ENCODE measurements at regions of chr3 and their contacts with region 1.

Region 1: GRCh38 chr3:179562591-179563270 is at the start of gene ACTL6A:
- DNase-seq: peak; percentile 99
- H3K4me3 Mint-ChIP-seq: peak within 1 kb of the TSS; percentile 97
- H3K27ac Mint-ChIP-seq: peak within 1 kb of the TSS; percentile 96
- H3K4me1 Mint-ChIP-seq: peaks cover 28% of the 10 kb centered on the region
- H3K27me3 Mint-ChIP-seq: peaks cover 2% of the 10 kb centered on the region
- total RNA-seq, gene ACTL6A: 89.2 to 90.0 TPM

Region 2: GRCh38 chr3:179015551-179016020 is 547.1 kb before region 1 on chr3:
- CTCF ChIA-PET with region 1: no interaction called
- intact Hi-C with region 1: loop called (anchors 1 kb)
- DNase-seq: peak; percentile 81
- H3K4me3 Mint-ChIP-seq: no peak overlapping the region
- H3K27ac Mint-ChIP-seq: no peak overlapping the region
- H3K4me1 Mint-ChIP-seq: peaks cover 35% of the 10 kb centered on the region
- H3K27me3 Mint-ChIP-seq: no peaks in the 10 kb centered on the region

Region 3: GRCh38 chr3:179105881-179106280 is 456.9 kb before region 1 on chr3:
- CTCF ChIA-PET with region 1: no interaction called
- intact Hi-C with region 1: loop called (anchors 2 kb)
- DNase-seq: no peak
- H3K4me3 Mint-ChIP-seq: no peak overlapping the region
- H3K27ac Mint-ChIP-seq: no peak overlapping the region
- H3K4me1 Mint-ChIP-seq: peaks cover 1% of the 10 kb centered on the region
- H3K27me3 Mint-ChIP-seq: no peaks in the 10 kb centered on the region

Region 4: GRCh38 chr3:179391906-179392305 is 170.8 kb before region 1 on chr3:
- CTCF ChIA-PET with region 1: no interaction called
- intact Hi-C with region 1: no loop called
- DNase-seq: no peak
- H3K4me3 Mint-ChIP-seq: no peak overlapping the region
- H3K27ac Mint-ChIP-seq: no peak overlapping the region
- H3K4me1 Mint-ChIP-seq: no peaks in the 10 kb centered on the region
- H3K27me3 Mint-ChIP-seq: no peaks in the 10 kb centered on the region

Region 5: DNA sequence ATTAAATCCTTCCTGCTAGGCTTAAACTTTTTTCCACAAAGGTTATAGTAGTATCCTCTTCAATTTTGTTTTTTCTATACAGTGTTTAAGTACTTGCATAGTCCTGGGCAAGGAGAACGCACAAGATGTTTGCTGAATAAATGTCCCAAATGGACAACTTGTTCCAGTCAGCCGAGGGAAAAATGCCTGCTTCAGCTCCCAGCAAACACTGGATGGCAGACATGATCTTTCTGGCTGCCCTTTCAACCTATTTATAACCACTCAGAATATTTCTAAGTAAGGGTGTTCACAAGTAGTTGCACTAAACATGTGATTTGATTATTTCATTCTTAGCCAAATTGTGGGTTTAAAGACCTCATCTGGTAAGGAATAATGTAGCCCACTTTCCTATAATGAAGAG is 141.2 kb before region 1 on chr3:
- CTCF ChIA-PET with region 1: interaction called, 5 read pairs
- intact Hi-C with region 1: loop called (anchors 1 kb)
- DNase-seq: no peak
- H3K4me3 Mint-ChIP-seq: no peak overlapping the region
- H3K27ac Mint-ChIP-seq: no peak overlapping the region
- H3K4me1 Mint-ChIP-seq: no peaks in the 10 kb centered on the region
- H3K27me3 Mint-ChIP-seq: no peaks in the 10 kb centered on the region

Region 6: DNA sequence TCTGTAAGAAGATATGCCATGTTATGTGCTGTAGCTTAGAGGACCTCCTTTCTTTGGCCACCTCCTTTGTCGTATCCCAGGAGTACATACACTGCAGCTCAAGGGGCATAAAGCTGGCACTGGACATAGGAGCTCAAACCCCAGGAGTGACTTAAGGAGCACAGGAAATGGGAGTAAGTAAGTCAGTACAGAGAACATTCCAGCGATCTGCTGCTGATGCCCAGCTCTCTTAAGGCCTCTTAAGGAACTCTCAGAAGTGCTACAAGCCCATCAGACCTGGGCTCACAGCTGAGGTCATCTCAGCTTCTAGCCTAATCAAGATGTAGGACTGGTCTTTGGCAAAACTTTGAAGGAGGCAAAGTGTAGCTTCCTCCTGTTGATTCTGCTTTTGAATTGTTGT is 21.6 kb before region 1 on chr3:
- CTCF ChIA-PET with region 1: no interaction called
- intact Hi-C with region 1: no loop called
- DNase-seq: no peak
- H3K4me3 Mint-ChIP-seq: no peak overlapping the region
- H3K27ac Mint-ChIP-seq: no peak overlapping the region
- H3K4me1 Mint-ChIP-seq: no peaks in the 10 kb centered on the region
- H3K27me3 Mint-ChIP-seq: no peaks in the 10 kb centered on the region

Region 7: DNA sequence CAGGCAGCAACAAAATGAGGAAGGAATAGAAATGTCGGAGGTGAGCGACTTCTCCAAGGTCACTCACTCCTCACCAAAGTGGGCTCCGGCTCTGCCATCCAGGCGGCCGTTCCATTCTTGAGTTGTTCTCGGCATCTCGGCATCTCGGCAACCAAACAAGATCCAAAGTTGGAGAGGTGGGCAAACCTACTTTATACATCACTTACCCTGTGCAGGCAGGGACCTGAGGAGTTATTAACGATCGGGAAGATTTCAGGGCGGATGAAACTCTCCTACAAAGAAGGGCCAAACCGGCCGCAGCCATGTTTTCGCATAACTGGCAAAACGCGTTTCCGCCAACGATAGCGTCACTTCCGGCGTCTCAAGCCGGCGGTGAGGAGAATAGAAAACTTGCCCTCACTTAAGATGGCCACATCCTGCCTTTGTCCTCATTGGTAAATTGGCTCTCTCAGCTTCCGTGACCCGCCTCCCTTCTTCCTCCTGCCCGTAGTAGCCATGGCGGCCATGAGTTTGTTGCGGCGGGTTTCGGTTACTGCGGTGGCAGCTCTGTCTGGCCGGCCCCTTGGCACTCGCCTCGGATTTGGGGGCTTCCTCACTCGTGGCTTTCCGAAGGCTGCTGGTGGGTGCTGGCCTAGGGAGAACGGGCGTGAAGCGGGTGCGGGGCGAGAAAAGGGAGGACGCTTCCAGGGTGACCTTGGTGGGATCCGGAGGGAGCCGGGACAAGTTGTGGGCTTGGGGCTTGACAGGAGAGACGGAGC is 41.8 kb after region 1 on chr3 and contains the starts of genes MRPL47 and NDUFB5:
- CTCF ChIA-PET with region 1: interaction called, 3 read pairs
- intact Hi-C with region 1: loop called (anchors 1 kb)
- DNase-seq: peak; percentile 96
- H3K4me3 Mint-ChIP-seq: peak within 1 kb of the TSS; percentile 100
- H3K27ac Mint-ChIP-seq: peak within 1 kb of the TSS; percentile 99
- H3K4me1 Mint-ChIP-seq: peaks cover 48% of the 10 kb centered on the region
- H3K27me3 Mint-ChIP-seq: no peaks in the 10 kb centered on the region
- total RNA-seq, gene MRPL47: 48.8 to 50.4 TPM
- total RNA-seq, gene NDUFB5: 148 to 151 TPM

Region 8: DNA sequence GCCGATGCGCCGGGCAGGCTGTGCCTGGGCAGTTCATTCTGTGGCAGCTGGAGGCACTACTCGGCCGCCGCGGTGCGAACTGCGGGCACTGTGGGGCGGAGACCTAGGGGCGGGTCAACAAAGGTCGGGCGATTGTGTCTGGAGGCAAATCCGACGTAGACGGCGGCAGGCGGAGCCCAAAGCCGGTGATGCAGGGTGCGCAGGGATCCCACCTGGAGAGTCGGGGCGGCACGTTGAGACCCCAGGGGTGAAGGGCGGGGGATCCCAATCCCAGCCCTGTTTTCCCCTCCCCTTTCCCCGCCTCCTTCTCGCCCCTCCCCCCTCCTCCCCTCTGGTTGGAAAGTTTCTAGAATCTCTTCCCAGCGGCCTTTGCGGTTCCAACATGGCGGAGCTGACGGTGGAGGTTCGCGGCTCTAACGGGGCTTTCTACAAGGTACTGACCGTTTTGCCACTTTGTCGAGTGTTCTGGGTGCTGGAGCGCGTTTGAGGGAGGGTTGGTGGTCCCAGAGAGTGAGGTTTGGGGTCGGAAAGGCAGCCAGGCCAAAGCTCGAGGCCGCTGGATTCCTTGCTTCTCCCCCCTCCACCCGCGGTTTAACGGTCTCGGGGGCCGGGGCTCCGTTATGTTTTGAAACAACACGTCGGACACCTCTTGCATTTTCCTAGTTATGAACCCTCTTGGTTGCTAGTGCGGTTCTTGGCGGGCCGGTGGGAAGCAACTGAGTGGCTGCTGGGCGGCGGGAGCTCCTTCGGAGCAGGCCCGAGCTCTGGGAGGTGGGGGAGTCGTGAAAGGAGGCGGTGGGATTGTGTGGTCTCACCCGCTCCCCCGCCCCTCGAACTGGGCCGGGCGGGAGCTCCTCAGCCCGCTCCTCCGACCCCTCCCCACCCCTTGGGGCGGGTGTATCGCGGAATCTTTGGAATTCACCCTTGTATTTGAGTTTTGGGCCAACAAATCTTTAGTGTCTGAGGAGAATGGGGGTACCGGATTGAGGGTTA is 1349.9 kb after region 1 on chr3 and contains the start of gene FXR1:
- CTCF ChIA-PET with region 1: no interaction called
- intact Hi-C with region 1: loop called (anchors 1 kb)
- DNase-seq: peak; percentile 96
- H3K4me3 Mint-ChIP-seq: peak within 1 kb of the TSS; percentile 93
- H3K27ac Mint-ChIP-seq: peak within 1 kb of the TSS; percentile 98
- H3K4me1 Mint-ChIP-seq: peaks cover 57% of the 10 kb centered on the region
- H3K27me3 Mint-ChIP-seq: no peaks in the 10 kb centered on the region
- total RNA-seq, gene FXR1: 184 to 194 TPM

Measured in activated naive CD4-positive, alpha-beta T cell treated with anti-CD3 and anti-CD28 coated beads for 36 hours (primary cell).